ENCODE measurements at regions of chr1 and their contacts with region 1.

Region 1: DNA sequence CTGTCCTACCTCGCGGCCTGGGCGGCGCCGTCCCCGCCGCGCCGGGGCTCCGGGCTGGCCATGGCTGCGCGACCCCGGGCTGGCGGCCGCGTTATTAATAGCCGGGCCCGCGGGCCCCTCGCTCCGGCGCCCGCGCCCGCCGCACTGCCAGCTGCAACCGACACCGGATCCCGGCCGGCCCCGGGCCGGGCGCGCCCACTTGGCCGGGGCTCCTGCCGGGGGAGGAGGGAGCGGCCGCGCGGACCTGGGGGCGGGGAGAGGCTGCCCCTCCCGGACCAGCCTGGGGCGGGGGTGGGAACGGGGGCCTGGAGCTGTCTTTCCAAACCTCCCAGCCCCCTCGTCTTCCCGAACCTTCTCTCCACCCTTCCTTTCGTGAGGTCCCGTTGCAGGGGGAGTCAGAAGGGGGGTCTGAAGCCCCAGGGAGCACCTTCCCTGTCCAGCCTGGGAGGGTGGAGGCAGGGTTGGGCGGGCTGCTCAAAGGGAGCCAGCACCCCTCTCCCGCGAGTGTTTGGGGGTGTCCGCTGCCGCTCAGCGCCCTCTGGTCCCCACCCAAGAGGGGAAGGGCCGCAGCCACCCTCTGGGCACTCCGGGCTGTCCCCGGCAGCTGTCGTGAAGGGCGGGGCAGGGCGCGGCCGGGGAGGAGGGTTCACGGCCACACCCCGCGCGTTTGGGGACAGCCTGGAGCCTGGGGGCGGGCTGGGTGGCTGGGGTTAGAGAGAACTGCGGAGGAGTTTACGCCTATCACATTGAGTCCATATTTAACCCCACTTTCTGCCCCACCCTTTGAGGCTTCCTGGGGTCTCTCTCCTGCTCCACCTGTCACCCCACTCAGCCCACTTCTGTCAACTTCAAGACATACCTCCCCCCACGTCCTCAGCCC is at the start of gene SYNC:
- DNase-seq: no peak
- H3K4me3 ChIP-seq: peak within 1 kb of the TSS; percentile 29 to 69 (median 46)
- H3K27ac ChIP-seq: no peak within 1 kb of the TSS
- H3K4me1 ChIP-seq: peaks cover 0 to 15% (median 6%) of the 10 kb centered on the region in 4 experiments; a peak in 6 of 7 replicates
- H3K27me3 ChIP-seq: peaks cover 5 to 35% (median 29%) of the 10 kb centered on the region in 4 experiments
- CTCF ChIP-seq: no peak
- EP300 ChIP-seq: no peak
- POLR2A ChIP-seq: no peak
- RAD21 ChIP-seq: no peak
- total RNA-seq, gene SYNC: 0.17 TPM in 1 of 2 replicates, not detected in the other

Region 2: GRCh38 chr1:32538887-32539583 is 163.8 kb before region 1 on chr1 and contains the start of gene ZBTB8A:
- CTCF ChIA-PET with region 1: no interaction called
- POLR2A ChIA-PET with region 1: no interaction called
- DNase-seq: peak; percentile 15 to 73
- H3K4me3 ChIP-seq: peak within 1 kb of the TSS; percentile 74 to 95 (median 78)
- H3K27ac ChIP-seq: peak within 1 kb of the TSS; percentile 83; the same call in 1 of the 2 replicates
- H3K4me1 ChIP-seq: peaks cover 0 to 2% (median 1%) of the 10 kb centered on the region in 4 experiments; a peak in 5 of 7 replicates
- H3K27me3 ChIP-seq: no peaks in the 10 kb centered on the region; a peak in 1 of 7 replicates
- CTCF ChIP-seq: no peak
- EP300 ChIP-seq: no peak
- POLR2A ChIP-seq: peak in 1 of 2 experiments; percentile 58; a peak in 1 of 3 replicates
- RAD21 ChIP-seq: no peak
- total RNA-seq, gene ZBTB8A: 8.9 and 10.4 TPM in 2 replicates

Region 3: GRCh38 chr1:32684167-32684811 is 18.6 kb before region 1 on chr1:
- CTCF ChIA-PET with region 1: interaction called, 9 read pairs
- POLR2A ChIA-PET with region 1: interaction called, 28 read pairs
- DNase-seq: no peak
- H3K4me3 ChIP-seq: no peak overlapping the region
- H3K27ac ChIP-seq: no peak overlapping the region
- H3K4me1 ChIP-seq: no peaks in the 10 kb centered on the region
- H3K27me3 ChIP-seq: no peaks in the 10 kb centered on the region
- CTCF ChIP-seq: no peak
- EP300 ChIP-seq: no peak
- POLR2A ChIP-seq: no peak
- RAD21 ChIP-seq: no peak

Measured in H1 (cell line).